PC-9 (cell line): ENCODE measurements at regions of chr2 and their contacts with region 1.

Region 1: DNA sequence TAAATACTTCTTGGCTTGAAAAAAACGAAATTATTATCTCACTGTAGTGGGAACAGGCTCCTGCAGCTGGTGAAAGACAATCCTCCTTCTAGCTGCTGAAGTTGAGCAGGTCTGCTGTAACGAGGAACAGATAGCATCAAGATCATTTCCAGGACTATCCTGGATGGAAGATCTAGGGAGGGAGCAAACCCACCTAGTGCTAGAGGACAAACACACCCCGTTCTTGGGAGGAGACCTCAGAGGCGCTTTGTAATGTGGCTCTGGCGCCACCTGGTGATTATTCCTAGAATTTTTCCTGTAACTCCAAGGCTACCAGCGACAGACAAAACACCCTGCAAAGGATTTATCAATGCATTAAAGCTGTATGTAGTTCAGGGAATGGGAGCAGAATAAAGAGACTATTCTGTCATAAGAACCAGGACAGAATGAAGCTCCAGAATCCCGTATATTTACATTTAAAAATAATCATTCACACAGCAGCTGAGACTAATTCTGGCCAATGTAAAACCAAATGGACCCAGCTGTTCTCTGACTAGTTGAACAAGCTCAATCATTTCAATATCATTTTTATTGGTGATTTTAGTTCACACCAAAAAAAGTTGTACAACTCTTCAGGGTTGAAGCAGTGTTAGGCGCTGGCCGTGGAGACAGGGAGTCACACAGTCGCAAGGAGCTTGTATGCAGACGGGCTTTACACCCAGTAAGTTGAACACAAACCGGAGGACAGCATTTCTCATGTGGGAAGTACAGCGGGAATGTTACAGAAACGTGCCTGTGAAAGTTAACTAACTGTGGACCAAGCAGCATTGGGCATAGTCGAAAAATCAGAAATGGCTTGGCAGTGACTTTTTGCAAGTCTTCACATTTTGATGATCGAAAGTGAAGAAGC is 290.3 kb downstream of the TRIB2 start:
- DNase-seq: peak; percentile 56 to 61
- H3K4me3 ChIP-seq: no peak overlapping the region
- H3K27ac ChIP-seq: no peak overlapping the region
- H3K4me1 ChIP-seq: peaks cover 9% of the 10 kb centered on the region; the same call in 1 of the 2 replicates
- H3K27me3 ChIP-seq: no peaks in the 10 kb centered on the region
- CTCF ChIP-seq: peak; percentile 98

Region 2: GRCh38 chr2:11688222-11689069 is 1318.6 kb before region 1 on chr2:
- CTCF ChIA-PET with region 1: no interaction called
- POLR2A ChIA-PET with region 1: no interaction called
- intact Hi-C with region 1: loop called (anchors 10 kb)
- DNase-seq: peak; percentile 78 to 90
- H3K4me3 ChIP-seq: peak overlapping the region; percentile 53
- H3K27ac ChIP-seq: peak overlapping the region; percentile 82
- H3K4me1 ChIP-seq: peaks cover 42% of the 10 kb centered on the region
- H3K27me3 ChIP-seq: no peaks in the 10 kb centered on the region
- CTCF ChIP-seq: peak; percentile 99

Region 3: GRCh38 chr2:12897181-12897580 is 109.9 kb before region 1 on chr2:
- CTCF ChIA-PET with region 1: no interaction called
- POLR2A ChIA-PET with region 1: no interaction called
- intact Hi-C with region 1: no loop called
- DNase-seq: no peak
- H3K4me3 ChIP-seq: no peak overlapping the region
- H3K27ac ChIP-seq: no peak overlapping the region
- H3K4me1 ChIP-seq: no peaks in the 10 kb centered on the region
- H3K27me3 ChIP-seq: no peaks in the 10 kb centered on the region
- CTCF ChIP-seq: no peak

Region 4: GRCh38 chr2:13091455-13091854 is 84.4 kb after region 1 on chr2:
- CTCF ChIA-PET with region 1: no interaction called
- POLR2A ChIA-PET with region 1: no interaction called
- intact Hi-C with region 1: no loop called
- DNase-seq: no peak
- H3K4me3 ChIP-seq: no peak overlapping the region
- H3K27ac ChIP-seq: no peak overlapping the region
- H3K4me1 ChIP-seq: no peaks in the 10 kb centered on the region
- H3K27me3 ChIP-seq: no peaks in the 10 kb centered on the region
- CTCF ChIP-seq: no peak